ENCODE measurements at regions of chr9 and their contacts with region 1.

Region 1: DNA sequence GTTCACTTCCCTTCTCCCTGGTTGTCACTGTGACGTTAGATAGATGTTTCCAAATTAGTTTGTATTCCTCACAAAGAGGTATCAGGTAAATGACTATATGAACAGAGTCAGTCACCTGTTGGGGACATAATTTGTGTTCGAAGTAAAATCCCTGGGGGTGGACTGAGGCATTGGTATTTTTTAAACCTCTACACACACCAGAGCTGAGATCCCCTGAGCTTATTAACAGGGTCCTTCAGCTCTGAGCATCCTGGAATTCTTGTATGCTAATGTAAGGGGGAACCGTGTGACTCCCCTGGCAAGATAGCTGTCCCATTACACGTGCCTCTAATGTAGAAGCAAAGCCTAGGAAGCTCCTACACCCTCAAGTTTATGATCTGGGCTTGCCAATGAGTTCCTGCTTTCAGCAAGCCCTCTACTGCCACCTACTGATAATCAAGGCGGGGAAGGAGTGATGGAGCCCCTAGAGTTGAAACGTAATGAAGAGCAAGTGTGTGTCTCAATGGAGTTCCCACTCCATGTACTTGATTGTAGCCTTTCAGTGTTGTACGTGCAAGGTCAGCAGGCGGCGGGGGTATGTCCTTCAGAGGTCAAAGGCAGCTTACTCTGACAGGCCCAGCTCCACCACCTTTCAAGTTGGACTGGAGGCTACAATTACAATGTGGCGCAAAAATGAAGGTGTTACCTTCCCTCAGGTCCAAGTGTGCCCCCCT is 14.4 kb downstream of the PRKACG start:
- DNase-seq: peak; percentile 85

Region 2: DNA sequence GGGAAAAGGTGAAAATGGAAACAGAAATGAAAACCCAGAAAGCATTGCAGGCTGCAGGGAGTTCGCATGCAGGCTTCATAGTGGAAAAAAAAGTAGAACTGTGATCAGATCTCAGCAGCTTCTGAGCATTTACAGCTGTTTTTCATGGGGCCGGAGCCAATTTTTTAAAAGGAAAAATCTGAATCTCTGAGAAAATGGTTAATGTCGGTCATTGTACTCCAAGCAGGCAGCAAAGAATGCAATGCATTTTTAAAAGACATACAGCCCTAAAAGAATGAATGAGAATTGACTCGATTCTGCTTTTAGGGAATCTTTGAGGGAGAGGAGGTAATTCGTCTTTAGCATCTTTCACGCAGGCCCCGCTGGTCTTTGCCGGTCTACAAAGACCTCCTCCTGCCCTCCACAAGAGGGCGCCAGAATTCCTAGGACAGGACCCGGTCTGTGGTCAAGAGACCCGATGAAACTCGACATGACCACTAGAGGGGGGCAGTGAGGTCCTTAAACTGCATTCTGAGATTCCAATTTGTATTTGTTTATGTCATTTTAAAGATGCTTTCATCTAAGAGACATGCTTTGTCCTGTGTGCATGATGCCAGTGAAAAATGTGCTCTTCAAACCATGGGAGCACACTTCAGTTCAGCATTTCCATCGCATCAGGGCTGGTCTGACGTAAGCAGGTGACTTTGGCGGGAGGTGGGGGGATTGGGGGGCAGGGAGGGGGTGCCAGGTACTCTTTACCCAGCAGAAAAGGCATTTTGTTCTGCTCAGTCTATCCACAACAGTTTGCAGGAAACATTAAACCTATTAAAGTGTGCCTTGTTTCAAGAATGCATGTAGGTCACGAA is 415.1 kb before region 1 on chr9:
- in situ Hi-C with region 1: loop called (anchors 25 kb)
- DNase-seq: peak; percentile 73

Region 3: DNA sequence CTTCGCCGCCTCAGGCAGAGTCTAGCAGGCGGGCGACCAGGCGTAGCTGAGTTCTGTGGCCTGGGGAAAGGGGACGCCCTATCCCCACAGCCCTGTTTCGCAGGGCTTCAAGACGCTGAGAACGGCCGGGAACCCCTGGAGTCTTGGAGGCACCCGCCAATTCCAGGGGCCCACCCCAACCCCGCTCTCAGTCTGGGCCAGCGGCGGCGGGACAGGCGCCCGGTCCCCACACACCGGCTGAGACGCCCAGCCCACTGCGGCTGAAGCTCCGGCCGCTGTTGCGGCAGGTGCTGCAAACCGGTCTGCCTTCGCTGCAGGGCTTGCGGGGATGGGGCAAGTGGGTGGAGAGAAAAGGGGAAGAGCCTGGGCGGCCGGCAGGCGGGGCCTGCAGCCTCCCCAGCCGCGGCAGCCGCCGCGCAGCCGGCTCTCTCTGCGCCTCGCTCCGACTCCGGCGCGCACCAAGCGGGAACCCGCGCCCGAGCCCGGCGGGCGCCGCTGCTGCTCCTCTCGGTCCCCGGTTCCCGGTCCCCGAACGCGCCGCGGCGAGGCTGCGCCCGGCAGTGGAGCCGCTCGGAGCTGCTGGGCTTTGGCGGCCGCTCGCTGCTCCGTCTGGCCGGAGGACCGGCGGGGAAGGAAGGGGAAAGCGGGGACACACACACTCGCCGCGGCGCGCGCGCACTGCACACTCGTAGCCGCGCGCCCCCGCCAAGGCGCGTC is 294.6 kb before region 1 on chr9 and contains the start of gene PIP5K1B:
- in situ Hi-C with region 1: loop called (anchors 25 kb)
- DNase-seq: peak; percentile 86

Region 4: GRCh38 chr9:68779558-68780384 is 219.8 kb before region 1 on chr9:
- in situ Hi-C with region 1: loop called (anchors 25 kb)
- DNase-seq: peak; percentile 92

Region 5: DNA sequence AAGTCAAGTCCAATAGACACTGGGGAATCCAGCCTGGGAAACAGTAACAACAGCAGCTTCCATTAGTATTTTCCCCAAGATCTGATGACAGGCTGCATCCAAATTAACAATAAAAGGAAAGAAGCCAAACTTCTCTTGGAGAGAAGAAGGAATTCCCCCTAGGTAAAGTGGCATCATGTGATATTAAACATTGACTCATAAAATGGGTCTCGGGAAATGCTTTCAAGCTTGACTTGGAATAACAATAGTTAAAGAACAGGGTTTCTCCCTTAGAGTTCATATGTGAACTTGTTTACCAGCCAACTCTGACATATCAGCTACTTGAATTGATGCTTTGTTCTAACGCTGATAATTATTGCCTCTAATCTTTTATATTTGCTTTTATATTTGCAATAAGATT is 370.9 kb after region 1 on chr9:
- in situ Hi-C with region 1: no loop called
- DNase-seq: no peak